MCF 10A (cell line): ENCODE measurements at regions of chr13 and their contacts with region 1.

Region 1: GRCh38 chr13:95771905-95772304 is 95.0 kb downstream of the DNAJC3 start:
- DNase-seq: no peak
- H3K4me3 Mint-ChIP-seq: no peak overlapping the region
- H3K27ac Mint-ChIP-seq: peak overlapping the region; percentile 58
- H3K4me1 Mint-ChIP-seq: no peaks in the 10 kb centered on the region
- H3K27me3 Mint-ChIP-seq: no peaks in the 10 kb centered on the region
- CTCF ChIP-seq: no peak

Region 2: GRCh38 chr13:95714142-95714829 is 57.6 kb before region 1 on chr13:
- CTCF ChIA-PET with region 1: no interaction called
- POLR2A ChIA-PET with region 1: no interaction called
- intact Hi-C with region 1: loop called (anchors 5 kb)
- DNase-seq: peak; percentile 95
- H3K4me3 Mint-ChIP-seq: no peak overlapping the region
- H3K27ac Mint-ChIP-seq: peak overlapping the region; percentile 94
- H3K4me1 Mint-ChIP-seq: peaks cover 17% of the 10 kb centered on the region
- H3K27me3 Mint-ChIP-seq: no peaks in the 10 kb centered on the region
- CTCF ChIP-seq: no peak

Region 3: GRCh38 chr13:95968906-95969305 is 197.0 kb after region 1 on chr13:
- CTCF ChIA-PET with region 1: no interaction called
- POLR2A ChIA-PET with region 1: no interaction called
- intact Hi-C with region 1: no loop called
- DNase-seq: no peak
- H3K4me3 Mint-ChIP-seq: no peak overlapping the region
- H3K27ac Mint-ChIP-seq: no peak overlapping the region
- H3K4me1 Mint-ChIP-seq: no peaks in the 10 kb centered on the region
- H3K27me3 Mint-ChIP-seq: no peaks in the 10 kb centered on the region
- CTCF ChIP-seq: no peak